ENCODE measurements at regions of chr12 and their contacts with region 1.

Region 1: GRCh38 chr12:116559162-116559935 is at the start of gene MAP1LC3B2:
- DNase-seq: peak; percentile 99 to 100 (median 100)
- H3K4me3 ChIP-seq: peak within 1 kb of the TSS in 6 of 7 experiments; percentile 13 to 71 (median 52)
- H3K27ac ChIP-seq: peak within 1 kb of the TSS; percentile 93 to 98
- H3K4me1 ChIP-seq: peaks cover 15 to 60% (median 53%) of the 10 kb centered on the region in 4 experiments
- H3K27me3 ChIP-seq: no peaks in the 10 kb centered on the region

Region 2: GRCh38 chr12:116533343-116534251 is 25.8 kb before region 1 on chr12:
- CTCF ChIA-PET with region 1: interaction called, 3 read pairs
- POLR2A ChIA-PET with region 1: interaction called, 16 read pairs
- DNase-seq: peak; percentile 67 to 74 (median 68)
- H3K4me3 ChIP-seq: peak overlapping the region; percentile 42 to 92 (median 77)
- H3K27ac ChIP-seq: peak overlapping the region; percentile 15 to 73
- H3K4me1 ChIP-seq: peaks cover 3 to 37% (median 20%) of the 10 kb centered on the region in 4 experiments
- H3K27me3 ChIP-seq: no peaks in the 10 kb centered on the region

Region 3: DNA sequence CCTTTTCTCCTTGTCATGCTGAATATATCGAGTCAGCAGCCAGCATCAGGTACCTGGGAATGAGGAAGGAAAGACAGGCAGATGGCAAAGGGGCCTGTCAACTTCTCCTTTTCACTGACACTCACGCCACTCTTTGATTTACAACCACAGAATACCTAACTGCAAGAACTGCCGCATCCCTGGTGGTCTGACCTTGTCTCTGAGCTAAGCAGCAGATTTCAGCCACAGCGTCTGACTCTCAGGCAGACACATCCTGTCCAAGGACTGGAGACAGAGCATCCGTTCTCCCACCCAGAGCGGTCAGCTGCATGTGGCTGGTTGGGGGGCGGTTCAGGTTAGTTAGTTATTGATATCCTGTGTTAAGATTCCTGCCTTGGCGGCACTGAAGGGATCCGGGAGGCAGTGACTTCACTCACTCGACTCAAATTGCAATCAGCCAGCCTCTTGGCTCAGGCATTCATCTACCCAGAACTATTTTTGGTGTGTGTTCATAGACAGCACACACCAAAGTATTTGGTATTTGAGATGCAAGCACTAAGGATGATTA is 11.3 kb before region 1 on chr12:
- CTCF ChIA-PET with region 1: interaction called, 44 read pairs
- POLR2A ChIA-PET with region 1: interaction called, 30 read pairs
- DNase-seq: peak; percentile 79 to 98 (median 98)
- H3K4me3 ChIP-seq: peak overlapping the region in 4 of 7 experiments; percentile 19 to 64 (median 29)
- H3K27ac ChIP-seq: peak overlapping the region; percentile 19 to 76
- H3K4me1 ChIP-seq: peaks cover 9 to 69% (median 25%) of the 10 kb centered on the region in 4 experiments
- H3K27me3 ChIP-seq: no peaks in the 10 kb centered on the region

Region 4: GRCh38 chr12:116599285-116600136 is 40.2 kb after region 1 on chr12:
- CTCF ChIA-PET with region 1: interaction called, 42 read pairs
- POLR2A ChIA-PET with region 1: interaction called, 4 read pairs
- DNase-seq: peak; percentile 72 to 76 (median 76)
- H3K4me3 ChIP-seq: peak overlapping the region in 4 of 7 experiments; percentile 5 to 64 (median 42)
- H3K27ac ChIP-seq: peak overlapping the region in 1 of 2 experiments; percentile 50
- H3K4me1 ChIP-seq: peaks cover 12 to 52% (median 36%) of the 10 kb centered on the region in 4 experiments
- H3K27me3 ChIP-seq: no peaks in the 10 kb centered on the region

Measured in common myeloid progenitor, CD34-positive (primary cell).